ENCODE measurements at regions of chr10 and their contacts with region 1.

Region 1: DNA sequence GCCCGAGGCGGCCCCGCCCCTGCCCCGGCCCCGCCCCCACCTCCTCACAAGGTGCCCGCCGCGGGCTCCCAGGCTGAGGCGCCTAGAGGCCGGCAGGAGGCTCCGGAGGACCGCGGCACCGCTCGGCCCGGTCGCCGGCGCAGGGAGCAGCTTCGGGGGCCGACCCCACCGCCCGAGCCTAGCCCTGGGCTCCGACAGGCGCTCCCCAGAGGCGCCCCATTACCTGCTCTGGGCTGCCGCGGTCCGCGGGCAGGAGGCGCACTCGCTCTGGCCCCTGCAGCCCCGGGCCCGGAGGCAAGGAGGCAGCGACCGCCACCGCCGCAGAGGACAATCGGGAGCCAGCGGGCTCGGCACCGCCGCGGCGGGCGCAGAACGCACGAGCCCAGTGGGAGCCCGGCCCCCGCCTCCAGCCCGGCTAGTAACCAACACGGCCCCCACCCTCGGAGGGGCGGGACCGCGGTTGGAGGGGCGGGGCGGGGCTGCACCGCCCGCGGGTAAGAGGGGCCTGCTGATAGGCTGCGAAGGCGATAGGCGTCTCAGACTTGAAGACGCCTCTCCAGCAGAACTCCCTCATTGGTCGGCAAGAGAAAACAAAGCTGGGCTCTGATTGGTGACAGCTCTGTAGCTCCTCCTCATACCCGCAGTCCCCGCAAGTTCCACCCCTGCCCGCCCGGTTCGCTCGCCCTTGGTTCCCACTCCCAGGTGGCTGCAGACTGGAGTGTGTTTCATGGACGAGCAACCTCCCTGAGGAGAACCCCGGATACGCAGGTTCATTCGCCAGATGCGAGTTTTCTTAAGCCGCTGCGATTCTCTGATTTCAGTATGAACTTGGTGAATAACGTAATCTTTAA is at the start of gene MPP7:
- DNase-seq: peak; percentile 99
- H3K4me3 ChIP-seq: peak within 1 kb of the TSS; percentile 71 to 99 (median 87)
- H3K27ac ChIP-seq: peak within 1 kb of the TSS; percentile 64 to 81
- H3K4me1 ChIP-seq: peaks cover 15 to 25% (median 20%) of the 10 kb centered on the region in 4 experiments
- H3K27me3 ChIP-seq: no peaks in the 10 kb centered on the region

Region 2: DNA sequence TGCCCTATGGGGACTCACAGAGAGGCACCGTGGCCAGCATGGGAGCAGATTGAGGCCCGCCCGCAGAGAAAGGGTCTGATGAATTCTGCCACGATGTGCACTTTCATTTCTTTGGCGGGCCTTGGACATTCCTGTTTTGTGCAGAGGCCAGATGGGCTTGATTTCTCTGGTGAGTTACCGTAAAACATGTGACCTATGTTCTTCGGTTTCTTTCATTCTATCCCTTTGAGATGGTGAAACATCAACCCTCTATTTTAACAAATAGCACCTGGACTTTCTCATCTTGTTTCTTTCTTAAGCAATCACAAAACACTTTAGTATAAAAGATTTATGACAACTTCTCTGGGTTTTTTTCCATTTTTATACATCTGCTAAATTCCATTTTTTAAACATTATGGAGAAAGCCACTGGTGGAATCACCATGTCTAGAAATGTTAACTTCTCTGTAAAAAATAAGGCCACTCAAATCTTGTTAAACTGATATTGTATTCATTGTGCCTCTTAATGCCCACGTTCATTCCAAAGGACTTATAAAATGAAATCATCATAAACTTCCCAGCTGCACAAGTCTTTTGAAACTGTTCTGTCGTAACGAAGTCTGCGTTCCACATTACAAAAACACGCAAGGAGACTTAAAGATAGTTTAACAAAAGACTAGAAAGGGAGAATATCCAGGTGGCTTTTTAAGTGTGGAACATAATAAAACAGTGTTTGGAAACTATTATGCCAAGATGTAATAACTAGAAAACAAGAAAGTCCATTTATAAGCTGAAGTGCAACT is 282.6 kb before region 1 on chr10:
- CTCF ChIA-PET with region 1: no interaction called
- POLR2A ChIA-PET with region 1: no interaction called
- DNase-seq: no peak
- H3K4me3 ChIP-seq: no peak overlapping the region
- H3K27ac ChIP-seq: no peak overlapping the region
- H3K4me1 ChIP-seq: no peaks in the 10 kb centered on the region
- H3K27me3 ChIP-seq: no peaks in the 10 kb centered on the region

Region 3: DNA sequence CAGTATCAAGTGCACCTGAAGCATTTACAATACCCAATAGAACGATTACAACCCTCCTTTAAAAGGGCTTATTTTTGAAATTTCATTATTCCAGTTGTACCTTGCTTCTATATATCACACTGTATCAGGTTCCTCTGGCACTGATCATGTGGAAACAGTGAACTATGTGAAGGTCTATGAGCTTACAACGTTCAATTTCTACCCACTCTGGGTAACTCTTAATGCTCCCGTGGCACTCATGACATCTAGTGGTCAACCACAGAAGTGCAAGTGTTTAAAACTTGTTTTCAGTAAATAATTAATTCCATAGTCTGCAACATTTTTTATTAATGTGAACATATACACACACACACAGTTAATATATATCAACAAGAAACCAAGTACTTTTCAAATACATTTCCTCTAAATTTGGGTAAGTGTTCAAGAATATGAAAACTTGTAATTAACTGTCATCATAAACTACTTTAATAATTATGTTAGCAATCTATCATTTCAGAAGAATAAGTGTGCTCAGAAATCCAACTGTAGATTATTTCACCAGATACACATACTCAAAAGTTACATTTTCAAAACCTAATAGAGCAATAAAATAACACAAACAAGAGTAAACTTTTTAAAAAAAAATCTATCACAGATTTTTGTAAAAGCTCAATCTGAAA is 61.0 kb before region 1 on chr10:
- CTCF ChIA-PET with region 1: interaction called, 11 read pairs
- POLR2A ChIA-PET with region 1: no interaction called
- DNase-seq: peak; percentile 62 to 82 (median 75)
- H3K4me3 ChIP-seq: no peak overlapping the region
- H3K27ac ChIP-seq: no peak overlapping the region
- H3K4me1 ChIP-seq: peaks cover 3 to 11% (median 9%) of the 10 kb centered on the region in 4 experiments
- H3K27me3 ChIP-seq: no peaks in the 10 kb centered on the region

Region 4: GRCh38 chr10:28320799-28321198 is 17.9 kb after region 1 on chr10:
- CTCF ChIA-PET with region 1: interaction called, 19 read pairs
- POLR2A ChIA-PET with region 1: interaction called, 3 read pairs
- DNase-seq: no peak
- H3K4me3 ChIP-seq: no peak overlapping the region
- H3K27ac ChIP-seq: no peak overlapping the region
- H3K4me1 ChIP-seq: peaks cover 0 to 5% (median 2%) of the 10 kb centered on the region in 4 experiments
- H3K27me3 ChIP-seq: no peaks in the 10 kb centered on the region

Region 5: GRCh38 chr10:28334296-28334695 is 31.4 kb after region 1 on chr10:
- CTCF ChIA-PET with region 1: interaction called, 23 read pairs
- POLR2A ChIA-PET with region 1: no interaction called
- DNase-seq: peak; percentile 95 to 98 (median 97)
- H3K4me3 ChIP-seq: peak overlapping the region in 2 of 7 experiments; percentile 19 to 39
- H3K27ac ChIP-seq: peak overlapping the region; percentile 93 to 96
- H3K4me1 ChIP-seq: peaks cover 26 to 64% (median 47%) of the 10 kb centered on the region in 4 experiments
- H3K27me3 ChIP-seq: no peaks in the 10 kb centered on the region

Region 6: DNA sequence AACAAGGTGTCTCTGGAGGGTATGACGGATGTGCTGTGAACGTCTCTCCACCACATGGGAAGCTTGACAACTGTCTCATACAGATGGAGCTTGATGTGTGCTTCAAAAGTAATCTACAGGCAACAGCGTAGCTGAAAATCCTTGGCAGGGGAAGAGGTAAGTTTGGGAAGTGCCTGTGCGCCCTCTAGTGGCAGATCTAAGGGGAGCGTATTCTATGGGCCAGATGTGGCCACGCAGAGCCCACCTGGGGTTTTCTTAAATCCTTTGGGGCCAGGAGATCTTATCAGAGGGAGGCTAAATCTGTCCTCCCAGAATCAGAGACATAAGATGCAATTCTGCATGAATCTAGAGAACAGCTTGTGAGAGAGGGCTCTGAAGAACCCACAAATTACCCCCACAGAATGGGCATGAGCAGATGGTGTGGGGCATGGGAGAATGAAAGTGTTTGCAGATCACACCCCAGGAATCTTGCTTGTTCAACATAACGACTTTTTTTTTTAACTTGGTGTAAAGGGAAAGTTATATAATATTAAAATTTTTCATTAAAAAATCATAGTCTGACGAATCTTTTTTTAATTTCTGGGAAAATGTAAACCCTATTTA is 91.2 kb after region 1 on chr10:
- CTCF ChIA-PET with region 1: interaction called, 23 read pairs
- POLR2A ChIA-PET with region 1: no interaction called
- DNase-seq: peak; percentile 62 to 79 (median 73)
- H3K4me3 ChIP-seq: peak overlapping the region in 1 of 7 experiments; percentile 17
- H3K27ac ChIP-seq: no peak overlapping the region
- H3K4me1 ChIP-seq: peaks cover 0 to 5% (median 4%) of the 10 kb centered on the region in 4 experiments
- H3K27me3 ChIP-seq: no peaks in the 10 kb centered on the region

Region 7: DNA sequence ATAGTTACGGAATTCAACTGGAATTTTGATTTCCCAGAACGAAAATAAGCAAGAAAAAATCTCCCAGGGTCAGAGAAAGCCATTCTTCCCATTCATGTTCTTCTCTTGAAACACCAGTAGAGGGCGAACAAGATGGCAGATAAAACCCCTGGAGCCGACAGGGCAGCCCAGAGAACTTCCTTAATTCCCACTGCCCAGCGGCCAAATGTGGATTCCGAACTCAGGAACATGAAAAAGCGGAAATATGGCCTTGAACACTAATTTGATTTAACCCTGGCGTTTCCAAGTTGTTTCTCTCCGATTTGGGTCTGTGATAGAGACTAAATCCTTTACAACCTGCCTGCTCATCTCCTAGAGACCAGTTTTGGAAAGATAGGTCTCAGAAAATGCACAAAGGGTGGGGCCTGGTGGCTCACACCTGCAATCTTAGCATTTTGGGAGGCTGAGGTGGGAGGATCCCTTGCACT is 129.4 kb after region 1 on chr10:
- CTCF ChIA-PET with region 1: no interaction called
- POLR2A ChIA-PET with region 1: no interaction called
- DNase-seq: peak; percentile 79 to 82 (median 81)
- H3K4me3 ChIP-seq: peak overlapping the region in 6 of 7 experiments; percentile 29 to 74 (median 51)
- H3K27ac ChIP-seq: no peak overlapping the region
- H3K4me1 ChIP-seq: peaks cover 0 to 15% (median 4%) of the 10 kb centered on the region in 4 experiments
- H3K27me3 ChIP-seq: no peaks in the 10 kb centered on the region

Measured in common myeloid progenitor, CD34-positive (primary cell).